ENCODE measurements at regions of chr7 and their contacts with region 1.

Region 1: DNA sequence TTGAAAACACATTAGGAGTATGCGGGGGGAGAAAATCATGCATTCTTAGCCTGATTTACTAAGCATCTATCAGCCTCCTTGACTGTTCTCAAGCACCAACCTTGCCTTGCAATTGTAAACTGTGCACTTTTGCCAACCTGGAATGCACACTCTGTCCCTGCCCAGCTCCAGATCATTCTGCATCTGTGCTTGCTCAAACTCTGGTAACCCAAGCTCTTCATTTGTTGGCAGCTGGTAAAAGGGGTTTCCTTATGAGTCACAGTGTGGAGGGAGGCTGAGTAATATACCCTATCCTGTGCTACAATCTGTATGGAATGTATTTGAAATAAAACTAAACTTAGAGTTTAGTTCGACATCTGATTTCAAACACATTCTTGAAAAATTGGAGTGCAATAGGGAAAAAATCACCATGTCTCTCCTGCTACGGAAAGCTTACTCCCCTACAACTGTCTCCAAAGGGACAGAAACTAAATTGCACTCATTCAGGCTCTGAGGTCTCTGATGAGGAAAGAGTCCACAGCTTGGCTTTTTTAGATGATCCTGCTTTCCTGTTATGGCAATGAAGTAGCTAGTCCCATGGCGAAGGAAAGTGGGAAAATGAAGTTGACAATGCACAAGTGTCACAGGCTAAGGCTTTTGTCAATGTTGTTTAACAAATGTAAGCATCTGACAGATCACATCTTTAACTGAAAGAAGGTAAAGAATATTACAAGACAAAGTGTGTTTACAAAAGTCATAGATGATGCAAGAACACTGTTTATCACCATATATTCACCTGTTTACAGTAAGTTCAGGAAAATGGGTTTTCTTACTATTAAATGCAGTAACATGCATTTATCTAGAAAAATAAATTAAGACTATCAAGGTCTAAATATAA is 61.9 kb downstream of the TES start:
- DNase-seq: peak; percentile 64
- H3K4me3 ChIP-seq: no peak overlapping the region
- H3K27ac ChIP-seq: peak overlapping the region; percentile 28 to 34
- H3K4me1 ChIP-seq: peaks cover 4% of the 10 kb centered on the region
- H3K27me3 ChIP-seq: no peaks in the 10 kb centered on the region
- CTCF ChIP-seq: no peak
- POLR2A ChIP-seq: no peak

Region 2: GRCh38 chr7:116316833-116317612 is 44.8 kb after region 1 on chr7:
- intact Hi-C with region 1: loop called (anchors 5 kb)
- DNase-seq: peak; percentile 78
- H3K4me3 ChIP-seq: no peak overlapping the region
- H3K27ac ChIP-seq: peak overlapping the region; percentile 22 to 48
- H3K4me1 ChIP-seq: no peaks in the 10 kb centered on the region
- H3K27me3 ChIP-seq: no peaks in the 10 kb centered on the region
- CTCF ChIP-seq: peak in 1 of 4 experiments; percentile 9
- POLR2A ChIP-seq: no peak

Region 3: GRCh38 chr7:116395125-116395791 is 123.1 kb after region 1 on chr7:
- intact Hi-C with region 1: loop called (anchors 10 kb)
- DNase-seq: no peak
- H3K4me3 ChIP-seq: no peak overlapping the region
- H3K27ac ChIP-seq: no peak overlapping the region
- H3K4me1 ChIP-seq: no peaks in the 10 kb centered on the region
- H3K27me3 ChIP-seq: no peaks in the 10 kb centered on the region
- CTCF ChIP-seq: no peak
- POLR2A ChIP-seq: no peak

Region 4: DNA sequence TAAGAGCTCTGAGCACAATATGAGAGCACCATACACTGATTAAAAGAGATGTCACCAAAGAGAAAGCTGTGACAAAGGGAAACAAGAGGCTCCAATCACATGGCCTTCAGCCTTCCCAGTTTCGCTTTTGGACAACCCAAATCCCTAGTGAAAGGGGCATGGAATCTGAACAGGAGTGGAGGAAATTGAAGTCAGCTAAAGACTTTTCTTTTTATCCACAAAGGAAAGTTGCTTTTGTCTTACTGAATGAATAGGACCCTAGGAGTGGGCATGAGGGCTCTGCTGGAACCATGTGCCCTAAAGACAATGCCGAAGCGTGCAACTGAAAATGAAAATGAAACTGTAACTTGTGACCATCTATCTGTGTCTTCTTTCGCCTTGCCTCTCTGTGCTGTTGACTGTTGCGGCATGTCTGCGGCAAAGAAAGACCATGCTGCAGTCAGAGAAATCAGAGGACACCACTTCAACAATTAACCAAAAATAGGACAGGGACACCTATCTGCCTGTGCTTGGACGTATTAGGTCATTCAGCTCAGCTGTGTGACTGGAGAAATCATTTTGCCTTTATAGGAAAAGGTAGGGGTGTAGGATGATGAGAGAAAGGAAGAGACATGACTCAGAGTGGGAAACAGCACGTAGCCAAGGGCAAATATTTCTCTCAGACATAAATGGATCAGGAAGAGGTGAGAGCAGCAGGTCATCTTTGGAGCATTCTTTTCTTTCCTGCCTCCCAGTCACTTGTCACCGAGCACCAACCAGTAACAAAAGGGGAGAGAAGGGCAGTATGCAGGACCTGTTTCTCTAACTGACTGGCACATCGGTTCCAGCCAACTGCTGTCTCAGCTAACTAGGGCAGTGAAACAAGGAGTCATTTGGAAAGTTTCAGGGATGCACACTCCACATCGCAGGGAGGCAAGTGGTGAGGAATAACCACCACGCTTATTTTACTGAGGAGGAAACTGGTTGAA is 239.6 kb after region 1 on chr7:
- intact Hi-C with region 1: loop called (anchors 5 kb)
- DNase-seq: no peak
- H3K4me3 ChIP-seq: no peak overlapping the region
- H3K27ac ChIP-seq: peak overlapping the region; percentile 48 to 51
- H3K4me1 ChIP-seq: no peaks in the 10 kb centered on the region
- H3K27me3 ChIP-seq: no peaks in the 10 kb centered on the region
- CTCF ChIP-seq: no peak
- POLR2A ChIP-seq: no peak

Region 5: DNA sequence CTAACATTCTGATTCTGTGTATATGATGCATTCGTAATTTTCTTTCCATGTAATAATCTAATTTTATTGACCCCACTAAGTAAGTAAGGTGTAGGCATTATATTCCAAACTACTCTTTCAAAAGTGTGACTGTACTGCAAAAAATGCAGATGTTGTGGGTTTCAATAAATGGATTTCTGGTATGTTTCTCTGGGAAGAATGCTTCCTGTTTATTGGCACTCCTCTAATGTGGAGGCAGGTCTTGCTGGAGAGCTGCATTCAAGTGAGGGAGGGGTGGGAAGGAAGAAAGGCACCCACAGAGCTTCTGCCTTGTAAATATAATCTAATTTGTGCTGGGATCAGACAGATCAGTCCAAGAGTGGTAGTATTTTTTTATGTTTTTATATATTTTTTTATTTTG is 705.0 kb after region 1 on chr7:
- intact Hi-C with region 1: no loop called
- DNase-seq: no peak
- H3K4me3 ChIP-seq: no peak overlapping the region
- H3K27ac ChIP-seq: no peak overlapping the region
- H3K4me1 ChIP-seq: no peaks in the 10 kb centered on the region
- H3K27me3 ChIP-seq: no peaks in the 10 kb centered on the region
- CTCF ChIP-seq: no peak
- POLR2A ChIP-seq: no peak

Measured in prostate gland (tissue), 2 donors.